ENCODE measurements at regions of chrX and their contacts with region 1.

Region 1: DNA sequence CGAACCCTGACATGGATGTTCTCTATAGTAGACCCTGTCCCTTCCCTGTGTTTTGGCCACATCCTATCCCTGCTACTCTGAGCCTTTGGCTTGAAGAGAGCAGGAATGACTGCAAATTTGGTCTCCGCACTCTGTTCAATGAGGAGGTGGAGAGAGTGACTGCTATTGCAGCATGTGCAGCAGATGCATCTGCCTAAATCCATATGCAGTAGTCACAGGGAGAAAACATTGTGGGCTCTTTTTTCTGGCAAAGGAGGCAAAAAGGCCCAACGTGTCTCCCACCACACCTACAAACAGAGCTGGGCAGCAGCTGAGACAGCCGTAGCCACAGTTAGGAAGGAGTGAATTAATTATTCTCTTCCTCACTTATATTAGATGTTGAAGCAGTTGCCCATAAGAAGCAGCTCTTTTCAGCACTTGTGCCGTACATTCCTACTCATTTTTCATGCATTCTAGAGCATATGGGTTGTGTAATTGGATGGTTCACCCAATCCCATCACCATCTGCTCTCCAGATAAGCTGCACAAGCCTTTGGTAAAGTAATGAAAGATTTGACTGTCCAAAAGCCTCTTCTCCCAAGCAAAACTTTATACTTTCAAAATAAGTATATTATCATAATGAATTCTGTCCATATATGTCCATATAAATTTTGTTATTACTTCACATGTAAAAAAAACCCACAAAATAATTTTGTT is 147.9 kb upstream of the FAM47A start:
- DNase-seq: no peak
- H3K4me3 ChIP-seq: no peak overlapping the region
- H3K27ac ChIP-seq: no peak overlapping the region
- H3K4me1 ChIP-seq: no peaks in the 10 kb centered on the region
- H3K27me3 ChIP-seq: peaks cover 3% of the 10 kb centered on the region
- CTCF ChIP-seq: no peak

Region 2: GRCh38 chrX:33434256-33435092 is 845.5 kb before region 1 on chrX:
- CTCF ChIA-PET with region 1: interaction called, 5 read pairs
- POLR2A ChIA-PET with region 1: no interaction called
- intact Hi-C with region 1: loop called (anchors 5 kb)
- DNase-seq: peak; percentile 63
- H3K4me3 ChIP-seq: no peak overlapping the region
- H3K27ac ChIP-seq: no peak overlapping the region
- H3K4me1 ChIP-seq: no peaks in the 10 kb centered on the region
- H3K27me3 ChIP-seq: no peaks in the 10 kb centered on the region
- CTCF ChIP-seq: peak; percentile 86